ENCODE measurements at regions of chr12 and their contacts with region 1.

Region 1: GRCh38 chr12:123983822-123984485 is 10.9 kb downstream of the ZNF664 start:
- DNase-seq: peak; percentile 44
- CTCF ChIP-seq: peak; percentile 65

Region 2: GRCh38 chr12:123905319-123905925 is 78.5 kb before region 1 on chr12:
- CTCF ChIA-PET with region 1: interaction called, 45 read pairs
- POLR2A ChIA-PET with region 1: no interaction called
- DNase-seq: peak; percentile 73
- CTCF ChIP-seq: peak; percentile 67

Region 3: GRCh38 chr12:123966596-123966995 is 17.4 kb before region 1 on chr12:
- CTCF ChIA-PET with region 1: interaction called, 11 read pairs
- POLR2A ChIA-PET with region 1: no interaction called
- DNase-seq: no peak
- CTCF ChIP-seq: no peak

Region 4: DNA sequence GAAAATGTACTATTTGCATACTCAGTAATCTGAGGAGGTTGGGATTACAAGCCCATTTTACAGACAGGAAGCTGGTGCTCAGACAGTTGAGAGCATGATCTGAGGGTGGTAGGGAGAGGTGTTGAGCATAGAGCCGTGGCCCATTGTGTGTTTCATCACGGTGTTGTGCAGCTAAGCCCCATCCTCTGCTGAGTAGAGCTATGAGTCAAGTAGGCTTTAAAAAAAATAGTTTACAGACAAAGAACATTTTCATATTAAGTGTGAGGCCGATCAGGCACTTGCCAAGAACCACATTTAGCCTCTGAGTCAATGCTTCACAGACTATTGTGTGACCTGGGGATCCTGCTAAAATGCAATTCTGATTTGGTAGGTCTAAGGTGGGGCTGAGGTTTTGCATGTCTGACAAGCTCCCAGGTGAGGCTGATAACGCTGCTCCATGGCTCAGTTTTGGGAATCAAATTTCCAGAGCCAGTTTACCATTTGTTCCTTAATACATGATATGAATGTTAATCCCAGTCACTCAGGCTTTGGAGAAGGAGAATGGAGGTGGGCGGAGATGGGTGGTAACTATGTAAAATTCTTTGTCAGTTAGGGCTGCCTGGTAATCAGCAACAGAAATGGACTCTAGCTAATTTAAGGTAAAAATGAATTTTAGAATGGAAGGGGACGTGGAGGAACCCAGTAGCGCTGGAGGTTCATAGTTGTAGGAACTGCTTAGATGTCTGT is 11.2 kb after region 1 on chr12:
- CTCF ChIA-PET with region 1: interaction called, 43 read pairs
- POLR2A ChIA-PET with region 1: no interaction called
- DNase-seq: no peak
- CTCF ChIP-seq: no peak

Measured in GM10248 (cell line).